ENCODE measurements at regions of chr15 and their contacts with region 1.

Region 1: GRCh38 chr15:91385311-91385710 is 285.3 kb downstream of the SV2B start:
- DNase-seq: no peak
- H3K4me3 ChIP-seq: no peak overlapping the region
- H3K4me3 Mint-ChIP-seq: no peak overlapping the region
- H3K27ac ChIP-seq: no peak overlapping the region
- H3K27ac Mint-ChIP-seq: no peak overlapping the region
- H3K4me1 ChIP-seq: no peaks in the 10 kb centered on the region
- H3K4me1 Mint-ChIP-seq: peaks cover 0 to 5% (median 0%) of the 10 kb centered on the region in 4 donors
- H3K27me3 ChIP-seq: no peaks in the 10 kb centered on the region
- H3K27me3 Mint-ChIP-seq: no peaks in the 10 kb centered on the region

Region 2: GRCh38 chr15:91238644-91239425 is 146.5 kb before region 1 on chr15:
- CTCF ChIA-PET with region 1: no interaction called
- POLR2A ChIA-PET with region 1: no interaction called
- intact Hi-C with region 1: no loop called
- DNase-seq: no peak
- H3K4me3 ChIP-seq: no peak overlapping the region
- H3K4me3 Mint-ChIP-seq: no peak overlapping the region
- H3K27ac ChIP-seq: no peak overlapping the region
- H3K27ac Mint-ChIP-seq: no peak overlapping the region
- H3K4me1 ChIP-seq: no peaks in the 10 kb centered on the region
- H3K4me1 Mint-ChIP-seq: no peaks in the 10 kb centered on the region
- H3K27me3 ChIP-seq: no peaks in the 10 kb centered on the region
- H3K27me3 Mint-ChIP-seq: peaks cover 14 to 29% of the 10 kb centered on the region in 2 donors

Region 3: GRCh38 chr15:91348752-91349500 is 36.4 kb before region 1 on chr15:
- CTCF ChIA-PET with region 1: no interaction called
- POLR2A ChIA-PET with region 1: no interaction called
- intact Hi-C with region 1: no loop called
- DNase-seq: peak in 3 of 5 donors; percentile 22 to 35 (median 27)
- H3K4me3 ChIP-seq: no peak overlapping the region
- H3K4me3 Mint-ChIP-seq: peak overlapping the region in 5 of 8 donors; percentile 32 to 69 (median 33)
- H3K27ac ChIP-seq: no peak overlapping the region
- H3K27ac Mint-ChIP-seq: peak overlapping the region in 2 of 7 donors; percentile 3 to 54
- H3K4me1 ChIP-seq: peaks cover 15% of the 10 kb centered on the region
- H3K4me1 Mint-ChIP-seq: peaks cover 12 to 45% (median 17%) of the 10 kb centered on the region in 4 donors
- H3K27me3 ChIP-seq: no peaks in the 10 kb centered on the region
- H3K27me3 Mint-ChIP-seq: peaks cover 0 to 3% of the 10 kb centered on the region in 2 donors

Region 4: DNA sequence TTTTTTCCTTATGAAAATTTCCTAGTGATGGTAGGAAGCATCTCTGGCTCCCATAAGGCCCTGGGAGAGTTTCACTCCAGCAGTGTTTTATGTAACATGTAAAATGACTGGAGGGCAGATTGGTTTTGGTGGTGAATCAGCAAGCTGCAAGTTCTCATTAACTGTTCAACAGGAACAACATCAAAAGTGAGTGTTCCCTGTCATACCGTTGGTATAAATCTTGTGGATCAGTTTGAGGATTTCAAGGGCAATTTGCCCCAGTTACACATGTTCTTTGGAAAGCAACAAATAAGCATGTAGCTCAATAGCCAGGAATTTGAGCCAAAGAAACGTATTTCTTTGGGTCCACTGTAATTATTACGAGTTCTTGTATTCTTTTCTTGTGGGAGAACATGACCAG is 60.4 kb after region 1 on chr15:
- CTCF ChIA-PET with region 1: no interaction called
- POLR2A ChIA-PET with region 1: no interaction called
- intact Hi-C with region 1: loop called (anchors 10 kb)
- DNase-seq: no peak
- H3K4me3 ChIP-seq: no peak overlapping the region
- H3K4me3 Mint-ChIP-seq: no peak overlapping the region
- H3K27ac ChIP-seq: no peak overlapping the region
- H3K27ac Mint-ChIP-seq: no peak overlapping the region
- H3K4me1 ChIP-seq: peaks cover 11% of the 10 kb centered on the region
- H3K4me1 Mint-ChIP-seq: peaks cover 5 to 20% (median 11%) of the 10 kb centered on the region in 4 donors
- H3K27me3 ChIP-seq: no peaks in the 10 kb centered on the region
- H3K27me3 Mint-ChIP-seq: no peaks in the 10 kb centered on the region

Measured in CD4-positive, alpha-beta memory T cell (primary cell).